Dendritic cell treated with granulocyte-macrophage colony-stimulating factor and Interleukin-4, amounts not matched to agents 40 ng/mL and 50 ng/mL, for 4 days (primary cell): ENCODE measurements at regions of chr2 and their contacts with region 1.

Region 1: GRCh38 chr2:68441179-68441993 is 25.7 kb downstream of the FBXO48 start:
- H3K4me3 Mint-ChIP-seq: peak overlapping the region; percentile 17
- H3K27ac Mint-ChIP-seq: peak overlapping the region; percentile 83
- H3K4me1 Mint-ChIP-seq: peaks cover 45% of the 10 kb centered on the region
- H3K27me3 Mint-ChIP-seq: no peaks in the 10 kb centered on the region

Region 2: DNA sequence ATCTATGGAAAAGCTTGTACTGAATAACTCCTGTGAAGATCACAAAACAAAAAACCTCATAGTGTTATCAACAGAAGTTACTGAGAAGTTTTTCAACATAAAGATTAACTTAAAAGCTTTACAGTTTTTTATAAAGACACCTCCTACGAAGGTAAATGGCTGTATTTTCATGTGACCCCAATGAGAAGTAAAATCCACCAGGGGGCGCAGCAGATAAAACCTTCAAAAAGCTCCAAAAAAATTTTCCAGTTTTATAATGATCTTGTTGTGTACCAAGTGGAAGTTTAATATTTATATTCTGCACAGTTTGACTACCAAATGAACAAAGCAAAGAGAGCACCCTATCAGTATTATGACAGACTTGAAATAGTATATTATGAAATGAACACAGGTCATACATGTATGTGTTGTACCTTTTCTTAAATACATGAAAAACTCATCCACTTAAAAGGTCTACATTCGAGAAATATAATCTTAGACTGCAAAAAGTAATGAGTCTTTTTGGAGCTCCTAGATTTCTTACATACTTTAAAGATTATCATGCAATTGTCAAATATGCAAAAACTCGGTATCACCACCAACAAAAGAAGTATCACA is 245.2 kb before region 1 on chr2:
- intact Hi-C with region 1: loop called (anchors 5 kb)
- H3K4me3 Mint-ChIP-seq: no peak overlapping the region
- H3K27ac Mint-ChIP-seq: no peak overlapping the region
- H3K4me1 Mint-ChIP-seq: peaks cover 43% of the 10 kb centered on the region
- H3K27me3 Mint-ChIP-seq: no peaks in the 10 kb centered on the region

Region 3: GRCh38 chr2:68282811-68283418 is 158.5 kb before region 1 on chr2:
- intact Hi-C with region 1: loop called (anchors 10 kb)
- H3K4me3 Mint-ChIP-seq: no peak overlapping the region
- H3K27ac Mint-ChIP-seq: peak overlapping the region; percentile 11
- H3K4me1 Mint-ChIP-seq: peaks cover 18% of the 10 kb centered on the region
- H3K27me3 Mint-ChIP-seq: no peaks in the 10 kb centered on the region

Region 4: GRCh38 chr2:68362069-68362468 is 79.3 kb before region 1 on chr2:
- intact Hi-C with region 1: loop called (anchors 1 kb)
- H3K4me3 Mint-ChIP-seq: peak overlapping the region; percentile 55
- H3K27ac Mint-ChIP-seq: peak overlapping the region; percentile 99
- H3K4me1 Mint-ChIP-seq: peaks cover 35% of the 10 kb centered on the region
- H3K27me3 Mint-ChIP-seq: no peaks in the 10 kb centered on the region

Region 5: DNA sequence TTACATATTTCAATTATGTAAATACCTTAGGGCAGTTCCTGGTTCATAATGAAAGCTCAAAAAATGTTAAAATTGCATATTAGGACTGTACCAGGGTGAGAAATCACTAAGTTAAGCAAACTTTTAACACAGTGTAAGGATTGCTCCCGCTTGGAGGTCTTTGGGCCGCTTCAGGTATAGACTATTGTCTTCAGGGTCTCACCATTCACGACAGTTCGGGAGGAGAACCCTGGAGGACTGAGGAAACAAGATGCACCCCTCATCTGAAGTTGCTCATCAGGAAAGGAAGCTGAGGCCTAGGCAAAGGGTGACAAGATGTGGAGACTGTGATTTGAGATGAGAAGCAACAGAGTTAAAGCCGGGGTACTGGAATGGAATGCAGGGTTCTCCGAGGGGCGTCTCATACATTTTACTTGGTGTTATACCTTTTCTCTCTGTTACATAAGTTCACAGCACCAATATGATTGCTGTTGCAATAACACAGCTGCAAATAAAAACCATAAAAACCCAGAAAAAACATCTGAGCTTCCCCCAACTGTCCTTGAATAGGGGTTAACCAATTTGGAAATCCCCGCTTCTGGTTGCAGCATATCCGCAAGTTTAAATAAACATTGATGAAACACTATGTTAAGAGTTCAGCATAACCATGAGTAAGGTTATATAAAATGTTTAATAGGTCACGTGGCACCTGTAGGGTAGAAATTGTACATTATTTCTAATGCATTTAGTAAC is 14.4 kb before region 1 on chr2:
- intact Hi-C with region 1: loop called (anchors 2 kb)
- H3K4me3 Mint-ChIP-seq: no peak overlapping the region
- H3K27ac Mint-ChIP-seq: no peak overlapping the region
- H3K4me1 Mint-ChIP-seq: peaks cover 18% of the 10 kb centered on the region
- H3K27me3 Mint-ChIP-seq: no peaks in the 10 kb centered on the region